Esophagus muscularis mucosa (tissue), 4 donors: ENCODE measurements at regions of chr12 and their contacts with region 1.

Region 1: GRCh38 chr12:104456417-104456949 is at the start of gene CHST11:
- DNase-seq: peak; percentile 94
- H3K4me3 ChIP-seq: peak within 1 kb of the TSS; percentile 69 to 83 (median 74)
- H3K27ac ChIP-seq: peak within 1 kb of the TSS; percentile 67 to 82 (median 72)
- H3K4me1 ChIP-seq: peaks cover 5 to 45% (median 39%) of the 10 kb centered on the region in 4 donors
- H3K27me3 ChIP-seq: peaks cover 0 to 4% (median 0%) of the 10 kb centered on the region in 4 donors
- CTCF ChIP-seq: peak in 2 of 3 experiments; percentile 29 to 34
- EP300 ChIP-seq: no peak
- POLR2A ChIP-seq: no peak
- total RNA-seq, gene CHST11: 5.7 to 15.7 (median 7.1) TPM

Region 2: DNA sequence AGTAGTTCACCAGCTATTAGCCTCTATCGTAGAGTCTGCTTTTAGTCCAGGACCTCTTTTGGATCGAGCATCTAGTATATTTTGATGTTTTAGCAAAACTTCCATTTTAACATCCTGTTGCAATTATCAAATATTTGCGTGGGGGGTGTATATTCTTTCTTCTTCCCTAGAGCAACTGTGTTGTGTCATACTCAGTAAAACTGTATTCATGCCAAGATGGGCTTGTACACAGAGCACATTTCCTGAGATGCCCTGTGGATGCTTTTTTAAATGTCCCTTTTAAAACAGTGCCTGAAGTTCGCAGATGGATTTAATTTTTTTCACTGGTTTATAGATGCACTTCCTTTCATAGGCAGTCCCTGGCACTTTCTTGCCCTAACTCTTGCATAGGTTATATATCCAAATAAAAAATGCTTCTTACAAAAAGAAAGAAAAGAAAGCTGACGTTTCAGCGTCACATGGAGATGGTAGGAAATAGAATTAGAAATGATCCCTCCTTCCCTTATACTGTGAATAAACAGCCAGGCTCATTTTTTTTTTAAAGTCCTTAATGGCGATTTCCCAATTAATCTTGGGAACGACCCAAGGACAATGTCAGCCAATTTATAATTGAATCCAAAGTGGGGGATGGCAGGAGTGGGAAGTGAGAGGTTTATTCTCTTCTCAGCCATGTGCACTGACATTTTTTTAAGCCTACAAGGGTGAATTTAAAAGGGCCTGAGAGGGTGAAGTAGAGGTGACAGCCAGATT is 254.6 kb after region 1 on chr12:
- intact Hi-C with region 1: loop called (anchors 10 kb)
- DNase-seq: no peak
- H3K4me3 ChIP-seq: peak overlapping the region in 2 of 4 donors; percentile 6 to 9
- H3K27ac ChIP-seq: peak overlapping the region in 3 of 4 donors; percentile 28 to 66 (median 44)
- H3K4me1 ChIP-seq: peaks cover 20 to 29% (median 25%) of the 10 kb centered on the region in 4 donors
- H3K27me3 ChIP-seq: no peaks in the 10 kb centered on the region
- CTCF ChIP-seq: no peak
- EP300 ChIP-seq: no peak
- POLR2A ChIP-seq: no peak